WTC11 (cell line): ENCODE measurements at regions of chr20 and their contacts with region 1.

Region 1: GRCh38 chr20:34522969-34523871 is 7.0 kb downstream of the DYNLRB1 start:
- DNase-seq: peak; percentile 83
- ATAC-seq: peak; percentile 97
- H3K4me3 Mint-ChIP-seq: no peak overlapping the region
- H3K27ac Mint-ChIP-seq: peak overlapping the region; percentile 84
- H3K4me1 Mint-ChIP-seq: peaks cover 12% of the 10 kb centered on the region
- H3K27me3 Mint-ChIP-seq: no peaks in the 10 kb centered on the region
- CTCF ChIP-seq: peak; percentile 41; the same call in 1 of the 2 replicates

Region 2: GRCh38 chr20:34293589-34293988 is 229.6 kb before region 1 on chr20:
- CTCF ChIA-PET with region 1: interaction called, 10 read pairs
- POLR2A ChIA-PET with region 1: no interaction called
- DNase-seq: no peak
- ATAC-seq: no peak
- H3K4me3 Mint-ChIP-seq: no peak overlapping the region
- H3K27ac Mint-ChIP-seq: no peak overlapping the region; the same call in 1 of the 2 replicates
- H3K4me1 Mint-ChIP-seq: peaks cover 2% of the 10 kb centered on the region; the same call in 1 of the 2 replicates
- H3K27me3 Mint-ChIP-seq: no peaks in the 10 kb centered on the region
- CTCF ChIP-seq: no peak

Region 3: DNA sequence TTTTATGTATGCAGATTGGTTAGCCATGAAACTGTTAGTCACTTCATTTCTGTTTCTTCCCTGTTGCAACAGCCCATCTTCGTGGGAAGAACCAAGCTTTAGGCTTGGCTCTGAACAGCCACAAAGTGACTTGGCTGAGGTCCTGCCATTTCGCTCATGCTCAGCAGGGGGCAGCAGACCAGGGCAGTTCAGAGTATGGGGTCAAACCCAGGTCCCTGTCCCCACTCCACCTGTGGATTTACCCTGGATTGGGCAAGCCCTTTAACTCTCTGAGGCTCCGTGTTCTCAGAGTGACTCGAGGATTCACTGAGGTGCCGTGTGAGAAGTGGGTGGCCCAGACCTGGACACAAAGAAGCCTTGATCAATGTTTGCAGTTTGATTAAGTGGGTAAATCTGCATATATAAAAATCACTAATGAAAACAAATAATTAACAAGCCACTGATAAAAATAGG is 15.5 kb after region 1 on chr20:
- CTCF ChIA-PET with region 1: interaction called, 22 read pairs
- POLR2A ChIA-PET with region 1: no interaction called
- DNase-seq: peak; percentile 72
- ATAC-seq: peak; percentile 70
- H3K4me3 Mint-ChIP-seq: no peak overlapping the region
- H3K27ac Mint-ChIP-seq: peak overlapping the region; percentile 49; the same call in 1 of the 2 replicates
- H3K4me1 Mint-ChIP-seq: peaks cover under 1% of the 10 kb centered on the region; the same call in 1 of the 2 replicates
- H3K27me3 Mint-ChIP-seq: no peaks in the 10 kb centered on the region
- CTCF ChIP-seq: peak; percentile 60